ENCODE measurements at regions of chr22 and their contacts with region 1.

Region 1: GRCh38 chr22:17171313-17172171 is 12.5 kb upstream of the HDHD5 start:
- DNase-seq: peak; percentile 75
- H3K4me3 ChIP-seq: peak overlapping the region; percentile 35 to 91 (median 54)
- H3K27ac ChIP-seq: no peak overlapping the region
- H3K4me1 ChIP-seq: peaks cover 4% of the 10 kb centered on the region
- H3K27me3 ChIP-seq: no peaks in the 10 kb centered on the region
- CTCF ChIP-seq: peak; percentile 79 to 91

Region 2: GRCh38 chr22:17077255-17077654 is 94.3 kb before region 1 on chr22:
- CTCF ChIA-PET with region 1: interaction called, 8 read pairs
- dilution Hi-C with region 1: no loop called
- in situ Hi-C with region 1: loop called in 1 of 2 experiments (anchors 5 kb)
- intact Hi-C with region 1: loop called (anchors 1 kb)
- DNase-seq: peak; percentile 70
- H3K4me3 ChIP-seq: no peak overlapping the region
- H3K27ac ChIP-seq: no peak overlapping the region
- H3K4me1 ChIP-seq: peaks cover 16% of the 10 kb centered on the region
- H3K27me3 ChIP-seq: no peaks in the 10 kb centered on the region
- CTCF ChIP-seq: no peak

Region 3: GRCh38 chr22:17158568-17159503 is 12.7 kb before region 1 on chr22 and contains the start of gene HDHD5:
- CTCF ChIA-PET with region 1: no interaction called
- dilution Hi-C with region 1: no loop called
- in situ Hi-C with region 1: no loop called
- intact Hi-C with region 1: loop called (anchors 1 kb)
- DNase-seq: peak; percentile 89
- H3K4me3 ChIP-seq: peak within 1 kb of the TSS; percentile 46 to 91 (median 70)
- H3K27ac ChIP-seq: peak within 1 kb of the TSS; percentile 43
- H3K4me1 ChIP-seq: peaks cover 8% of the 10 kb centered on the region
- H3K27me3 ChIP-seq: no peaks in the 10 kb centered on the region
- CTCF ChIP-seq: no peak
- total RNA-seq, gene HDHD5: 27.2 to 33.0 TPM

Region 4: DNA sequence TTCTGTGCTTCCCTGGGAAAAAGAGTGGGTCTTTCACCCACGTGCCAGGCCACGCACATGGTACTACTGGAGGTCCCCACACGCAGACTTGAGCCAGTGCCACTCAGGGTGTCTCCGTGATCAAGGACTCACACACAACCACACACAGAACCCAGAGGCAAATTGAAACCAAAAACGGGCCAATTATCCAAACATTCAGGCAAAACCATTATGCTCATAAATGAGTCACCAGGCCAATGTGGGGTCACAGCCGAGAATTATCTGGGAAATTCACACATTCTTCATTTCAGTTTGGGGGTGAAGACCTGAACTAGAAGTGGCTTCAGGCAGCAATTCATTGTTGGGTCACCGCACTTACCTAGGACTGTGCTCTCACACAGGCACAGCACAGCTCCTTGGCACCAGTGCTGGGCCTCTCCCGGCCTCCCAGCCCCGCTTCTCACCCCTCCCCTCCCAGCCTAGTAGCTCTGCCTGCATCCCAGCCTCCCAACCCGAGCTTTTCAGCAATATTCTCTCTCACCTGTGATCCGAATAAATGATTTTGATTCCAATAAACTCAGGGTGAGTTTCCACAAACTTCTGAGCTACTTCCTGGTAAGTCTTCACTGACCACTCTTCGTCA is 19.7 kb after region 1 on chr22:
- CTCF ChIA-PET with region 1: no interaction called
- dilution Hi-C with region 1: no loop called
- in situ Hi-C with region 1: no loop called
- intact Hi-C with region 1: no loop called
- DNase-seq: peak; percentile 6
- H3K4me3 ChIP-seq: no peak overlapping the region
- H3K27ac ChIP-seq: no peak overlapping the region
- H3K4me1 ChIP-seq: no peaks in the 10 kb centered on the region
- H3K27me3 ChIP-seq: no peaks in the 10 kb centered on the region
- CTCF ChIP-seq: no peak

Region 5: GRCh38 chr22:17443405-17444203 is 272.1 kb after region 1 on chr22:
- CTCF ChIA-PET with region 1: no interaction called
- dilution Hi-C with region 1: no loop called
- in situ Hi-C with region 1: no loop called
- intact Hi-C with region 1: no loop called
- DNase-seq: no peak
- H3K4me3 ChIP-seq: no peak overlapping the region
- H3K27ac ChIP-seq: no peak overlapping the region
- H3K4me1 ChIP-seq: no peaks in the 10 kb centered on the region
- H3K27me3 ChIP-seq: no peaks in the 10 kb centered on the region
- CTCF ChIP-seq: no peak

Region 6: DNA sequence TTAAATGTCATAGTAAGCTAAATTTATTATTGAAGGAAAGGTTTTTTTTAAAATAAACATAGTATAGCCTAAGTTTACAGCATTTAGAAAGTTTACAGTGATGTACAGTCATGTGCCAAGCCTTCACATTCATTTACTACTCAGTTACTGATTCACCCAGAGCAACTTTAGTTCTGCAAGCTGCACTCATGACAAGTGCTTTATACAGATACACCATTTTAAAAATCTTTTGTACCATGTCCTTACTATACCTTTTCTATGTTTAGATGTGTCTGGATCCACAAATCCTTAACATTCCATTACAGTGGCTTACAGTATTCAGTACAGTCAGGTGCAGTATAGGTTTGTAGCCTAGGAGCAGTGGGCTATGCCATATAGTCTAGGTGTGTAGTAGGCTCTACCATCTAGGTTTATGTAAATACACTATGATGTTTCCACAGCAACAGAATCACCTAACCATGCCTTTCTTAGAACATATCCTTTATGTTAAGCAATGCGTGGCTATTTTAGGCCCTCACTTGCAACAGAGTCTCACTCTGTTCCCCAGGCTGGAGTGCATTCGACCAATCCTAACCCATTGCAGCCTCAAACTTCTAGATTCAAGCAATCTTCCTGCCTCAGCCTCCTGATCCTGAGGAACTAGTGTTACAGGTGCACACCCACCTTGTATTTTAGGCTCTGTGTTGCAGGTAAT is 312.3 kb after region 1 on chr22:
- CTCF ChIA-PET with region 1: interaction called, 5 read pairs
- dilution Hi-C with region 1: no loop called
- in situ Hi-C with region 1: loop called (anchors 10 to 25 kb)
- intact Hi-C with region 1: no loop called
- DNase-seq: no peak
- H3K4me3 ChIP-seq: no peak overlapping the region
- H3K27ac ChIP-seq: no peak overlapping the region
- H3K4me1 ChIP-seq: no peaks in the 10 kb centered on the region
- H3K27me3 ChIP-seq: no peaks in the 10 kb centered on the region
- CTCF ChIP-seq: no peak

Region 7: DNA sequence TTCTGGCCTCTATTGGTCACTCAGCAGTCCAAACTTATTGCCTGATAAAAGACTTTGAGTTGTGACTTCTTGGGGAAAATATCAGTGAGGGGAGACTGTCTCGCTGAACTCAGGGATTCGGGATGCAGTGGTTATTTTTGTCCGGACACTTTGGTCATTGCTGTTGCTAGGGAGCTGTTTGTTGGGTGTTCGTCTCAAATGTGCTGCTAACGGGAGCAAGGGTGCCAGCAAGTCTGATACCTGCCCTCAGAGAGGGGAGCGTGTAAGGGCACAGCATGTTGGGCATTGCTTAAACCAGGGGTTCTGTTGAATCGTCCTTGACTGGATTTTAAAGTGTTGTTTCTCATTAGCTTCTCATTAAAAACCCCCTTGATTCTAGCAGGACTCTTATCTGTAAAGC is 342.5 kb after region 1 on chr22:
- CTCF ChIA-PET with region 1: no interaction called
- dilution Hi-C with region 1: no loop called
- in situ Hi-C with region 1: no loop called
- intact Hi-C with region 1: no loop called
- DNase-seq: no peak
- H3K4me3 ChIP-seq: no peak overlapping the region
- H3K27ac ChIP-seq: no peak overlapping the region
- H3K4me1 ChIP-seq: no peaks in the 10 kb centered on the region
- H3K27me3 ChIP-seq: peaks cover 1% of the 10 kb centered on the region
- CTCF ChIP-seq: no peak

Measured in mammary epithelial cell (primary cell).